Activated CD8-positive, alpha-beta T cell treated with anti-CD3 and anti-CD28 coated beads, Interleukin-2, amount 10 ng/mL, durations not matched to agents 7 days and 5 days (primary cell): ENCODE measurements at regions of chr17 and their contacts with region 1.

Region 1: GRCh38 chr17:1573916-1574696 is 11.5 kb upstream of the PITPNA start:
- DNase-seq: peak; percentile 73
- ATAC-seq: peak; percentile 84
- H3K4me3 Mint-ChIP-seq: no peak overlapping the region
- H3K27ac Mint-ChIP-seq: no peak overlapping the region
- H3K4me1 Mint-ChIP-seq: peaks cover 14% of the 10 kb centered on the region
- H3K27me3 Mint-ChIP-seq: no peaks in the 10 kb centered on the region

Region 2: GRCh38 chr17:1509290-1509881 is 64.7 kb before region 1 on chr17:
- CTCF ChIA-PET with region 1: no interaction called
- POLR2A ChIA-PET with region 1: no interaction called
- DNase-seq: no peak
- ATAC-seq: no peak
- H3K4me3 Mint-ChIP-seq: no peak overlapping the region
- H3K27ac Mint-ChIP-seq: no peak overlapping the region
- H3K4me1 Mint-ChIP-seq: peaks cover 20% of the 10 kb centered on the region
- H3K27me3 Mint-ChIP-seq: no peaks in the 10 kb centered on the region

Region 3: DNA sequence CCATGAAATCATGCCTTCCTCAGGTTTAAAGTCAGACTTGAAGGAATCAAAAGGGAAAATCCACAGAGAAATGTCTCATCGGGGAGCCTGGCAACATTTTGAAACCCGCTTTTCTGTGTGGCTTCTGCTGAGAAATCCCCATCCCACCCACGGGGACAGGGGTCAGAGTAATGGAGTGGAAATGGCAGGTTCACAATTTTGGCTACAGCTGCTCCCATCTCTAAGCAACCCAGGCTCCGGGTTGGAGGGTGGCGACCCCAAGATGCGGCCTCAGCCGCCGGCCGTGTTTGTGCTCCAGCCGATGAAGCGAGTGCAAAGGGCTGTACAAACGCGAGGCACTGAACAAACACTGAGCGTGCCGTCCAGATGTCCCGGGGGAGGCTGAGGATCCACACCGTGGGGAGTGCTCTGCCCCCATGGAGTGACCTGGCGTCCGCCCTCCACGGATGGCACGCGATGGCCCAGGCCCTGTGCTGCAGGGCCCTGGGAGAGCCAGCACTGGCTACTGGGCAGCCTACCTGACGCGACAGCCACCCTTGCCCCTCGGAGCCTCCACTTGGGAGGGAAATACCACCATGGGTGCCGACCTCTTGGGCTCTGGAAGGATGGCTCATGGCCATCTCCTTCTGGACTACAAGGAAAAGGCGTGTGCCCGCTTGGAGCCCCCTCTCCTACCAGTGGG is 32.4 kb after region 1 on chr17:
- CTCF ChIA-PET with region 1: interaction called, 10 read pairs
- POLR2A ChIA-PET with region 1: no interaction called
- DNase-seq: no peak
- ATAC-seq: no peak
- H3K4me3 Mint-ChIP-seq: no peak overlapping the region
- H3K27ac Mint-ChIP-seq: no peak overlapping the region
- H3K4me1 Mint-ChIP-seq: peaks cover 12% of the 10 kb centered on the region
- H3K27me3 Mint-ChIP-seq: no peaks in the 10 kb centered on the region

Region 4: DNA sequence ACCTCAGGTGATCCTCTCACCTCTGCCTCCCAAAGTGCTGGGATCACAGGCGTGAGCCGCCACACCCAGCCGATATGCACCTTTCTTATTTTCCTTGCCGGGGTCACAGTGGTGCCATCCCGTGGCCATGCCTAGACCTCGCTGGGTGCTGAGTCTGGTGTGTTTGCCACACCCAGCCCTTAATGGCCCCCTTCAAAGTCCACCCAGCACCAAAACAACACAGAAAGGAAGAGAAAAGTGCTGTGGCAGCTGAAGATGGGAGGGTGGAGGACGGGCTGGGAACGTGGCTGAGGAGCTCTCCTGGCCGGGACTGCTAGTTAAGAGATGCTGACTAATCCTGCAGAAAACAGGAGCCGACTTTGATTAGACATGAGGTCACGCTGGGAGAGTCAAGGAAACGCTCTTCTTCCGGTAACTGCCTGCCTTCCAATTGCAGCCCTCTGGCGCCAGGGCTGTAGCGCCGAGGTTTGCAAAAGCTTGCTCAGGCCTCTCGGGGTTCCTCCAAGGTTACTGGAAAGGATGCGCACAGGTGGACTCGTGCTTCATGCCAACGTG is 43.6 kb after region 1 on chr17:
- CTCF ChIA-PET with region 1: interaction called, 10 read pairs
- POLR2A ChIA-PET with region 1: no interaction called
- DNase-seq: no peak
- ATAC-seq: no peak
- H3K4me3 Mint-ChIP-seq: no peak overlapping the region
- H3K27ac Mint-ChIP-seq: no peak overlapping the region
- H3K4me1 Mint-ChIP-seq: peaks cover 6% of the 10 kb centered on the region
- H3K27me3 Mint-ChIP-seq: no peaks in the 10 kb centered on the region

Region 5: DNA sequence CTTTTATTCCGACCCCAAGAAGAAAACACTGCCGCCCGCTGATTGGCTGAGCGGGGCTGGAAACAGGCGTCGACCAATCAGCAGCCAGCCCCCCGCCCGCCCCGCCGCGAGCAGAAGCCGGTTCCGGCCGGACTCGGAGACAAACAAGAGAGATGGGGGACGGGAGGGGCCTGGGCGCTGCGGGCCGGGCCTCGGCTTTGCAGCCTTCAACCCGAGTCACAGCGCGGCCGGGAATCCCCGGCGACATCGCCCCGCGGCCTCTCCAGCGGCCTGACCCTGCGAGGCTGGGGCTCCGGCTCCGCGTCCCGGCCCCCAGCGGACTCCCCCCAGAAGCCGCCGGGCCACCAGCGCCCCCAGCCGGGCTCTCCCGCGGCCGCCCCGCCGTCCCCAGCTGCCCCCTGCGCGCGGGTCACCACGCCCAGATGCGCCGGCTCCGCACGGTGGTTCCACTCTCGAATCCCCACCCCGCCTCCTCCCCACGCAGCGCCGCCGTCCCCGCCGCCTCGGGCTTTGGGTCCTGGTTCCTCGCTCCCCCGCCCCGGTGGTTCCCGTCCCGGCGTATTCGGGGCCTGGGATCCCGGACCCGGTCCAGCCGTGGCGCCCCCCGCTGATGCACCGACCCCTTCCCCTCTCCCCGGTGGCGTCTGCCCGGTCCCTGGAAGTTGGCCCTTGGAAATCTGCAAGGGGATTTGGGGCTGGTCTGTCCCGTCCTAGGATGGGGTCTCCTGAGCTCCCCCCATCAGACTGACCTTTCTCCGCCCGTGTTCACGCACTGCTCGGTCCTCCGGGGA is 54.9 kb after region 1 on chr17:
- CTCF ChIA-PET with region 1: interaction called, 94 read pairs
- POLR2A ChIA-PET with region 1: interaction called, 6 read pairs
- DNase-seq: peak; percentile 94
- ATAC-seq: peak; percentile 85
- H3K4me3 Mint-ChIP-seq: peak overlapping the region; percentile 85
- H3K27ac Mint-ChIP-seq: peak overlapping the region; percentile 78
- H3K4me1 Mint-ChIP-seq: peaks cover 28% of the 10 kb centered on the region
- H3K27me3 Mint-ChIP-seq: peaks cover 22% of the 10 kb centered on the region